CD14-positive monocyte (primary cell): ENCODE measurements at regions of chr16 and their contacts with region 1.

Region 1: GRCh38 chr16:29694384-29695195 is 15.6 kb downstream of the QPRT start:
- DNase-seq: no peak
- H3K4me3 ChIP-seq: no peak overlapping the region
- H3K4me3 Mint-ChIP-seq: no peak overlapping the region
- H3K27ac ChIP-seq: no peak overlapping the region
- H3K27ac Mint-ChIP-seq: peak overlapping the region in 1 of 7 donors; percentile 25
- H3K4me1 ChIP-seq: peaks cover 6 to 8% of the 10 kb centered on the region in 2 donors
- H3K4me1 Mint-ChIP-seq: peaks cover 12% of the 10 kb centered on the region
- H3K27me3 ChIP-seq: no peaks in the 10 kb centered on the region
- H3K27me3 Mint-ChIP-seq: peaks cover 4 to 5% (median 5%) of the 10 kb centered on the region in 3 donors
- CTCF ChIP-seq: no peak

Region 2: GRCh38 chr16:29729116-29729521 is 34.5 kb after region 1 on chr16:
- intact Hi-C with region 1: loop called in 1 of 2 experiments (anchors 5 kb)
- DNase-seq: peak in 2 of 3 donors; percentile 28 to 36
- H3K4me3 ChIP-seq: no peak overlapping the region
- H3K4me3 Mint-ChIP-seq: no peak overlapping the region
- H3K27ac ChIP-seq: no peak overlapping the region
- H3K27ac Mint-ChIP-seq: no peak overlapping the region
- H3K4me1 ChIP-seq: peaks cover 0 to 5% of the 10 kb centered on the region in 2 donors
- H3K4me1 Mint-ChIP-seq: peaks cover 11% of the 10 kb centered on the region
- H3K27me3 ChIP-seq: no peaks in the 10 kb centered on the region
- H3K27me3 Mint-ChIP-seq: peaks cover 0 to 8% (median 6%) of the 10 kb centered on the region in 3 donors
- CTCF ChIP-seq: peak; percentile 74

Region 3: GRCh38 chr16:29848420-29849297 is 154.1 kb after region 1 on chr16:
- intact Hi-C with region 1: loop called in 1 of 2 experiments (anchors 5 kb)
- DNase-seq: peak; percentile 64 to 70 (median 64)
- H3K4me3 ChIP-seq: no peak overlapping the region
- H3K4me3 Mint-ChIP-seq: no peak overlapping the region
- H3K27ac ChIP-seq: no peak overlapping the region
- H3K27ac Mint-ChIP-seq: no peak overlapping the region
- H3K4me1 ChIP-seq: no peaks in the 10 kb centered on the region
- H3K4me1 Mint-ChIP-seq: no peaks in the 10 kb centered on the region
- H3K27me3 ChIP-seq: no peaks in the 10 kb centered on the region
- H3K27me3 Mint-ChIP-seq: peaks cover 0 to 2% (median 1%) of the 10 kb centered on the region in 3 donors
- CTCF ChIP-seq: peak; percentile 92

Region 4: DNA sequence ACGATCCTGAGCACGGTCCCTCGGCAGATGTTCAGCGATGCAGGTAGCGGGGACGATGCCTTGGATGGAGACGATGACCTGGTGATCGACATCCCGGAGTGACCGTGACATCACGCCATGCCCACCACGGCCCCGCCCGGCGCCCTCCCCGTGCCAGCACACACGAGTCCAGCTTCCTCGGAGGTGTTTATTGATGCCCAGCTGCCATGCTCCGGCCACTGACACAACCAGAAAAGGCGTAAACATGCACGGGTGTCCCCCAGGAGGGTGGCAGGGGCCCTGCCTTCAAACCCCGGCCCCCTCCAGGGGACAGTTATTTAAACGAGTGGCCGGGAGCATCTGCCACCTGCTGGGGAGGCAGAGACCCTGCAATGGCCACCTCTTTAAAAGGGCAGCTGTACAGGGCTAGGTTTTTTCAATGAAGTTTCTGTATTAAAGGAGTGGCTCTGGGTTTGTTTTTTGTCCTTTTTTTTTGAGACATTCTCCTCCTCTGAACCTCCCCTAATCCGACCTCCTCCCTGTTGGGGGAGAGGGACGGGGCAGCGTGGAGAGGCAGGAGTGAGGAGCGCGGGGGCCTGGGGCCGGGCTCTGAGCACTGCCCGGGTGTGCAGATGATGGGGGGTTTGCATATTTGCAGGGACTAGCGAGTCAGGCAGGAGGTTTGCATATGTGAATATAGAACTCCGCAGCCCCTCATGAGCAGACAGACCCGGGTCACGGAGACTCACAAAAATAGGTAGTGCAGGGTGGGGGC is 310.9 kb after region 1 on chr16:
- intact Hi-C with region 1: loop called in 1 of 2 experiments (anchors 5 kb)
- DNase-seq: peak; percentile 15 to 34 (median 26)
- H3K4me3 ChIP-seq: no peak overlapping the region
- H3K4me3 Mint-ChIP-seq: no peak overlapping the region
- H3K27ac ChIP-seq: no peak overlapping the region
- H3K27ac Mint-ChIP-seq: no peak overlapping the region
- H3K4me1 ChIP-seq: peaks cover 2 to 4% of the 10 kb centered on the region in 2 donors
- H3K4me1 Mint-ChIP-seq: peaks cover 2% of the 10 kb centered on the region
- H3K27me3 ChIP-seq: peaks cover 6 to 15% of the 10 kb centered on the region in 2 donors
- H3K27me3 Mint-ChIP-seq: peaks cover 12 to 25% (median 18%) of the 10 kb centered on the region in 3 donors
- CTCF ChIP-seq: peak; percentile 77

Region 5: GRCh38 chr16:30028438-30029076 is 334.0 kb after region 1 on chr16:
- intact Hi-C with region 1: loop called in 1 of 2 experiments (anchors 10 kb)
- DNase-seq: no peak
- H3K4me3 ChIP-seq: no peak overlapping the region
- H3K4me3 Mint-ChIP-seq: peak overlapping the region in 1 of 2 donors; percentile 77
- H3K27ac ChIP-seq: no peak overlapping the region
- H3K27ac Mint-ChIP-seq: peak overlapping the region in 1 of 7 donors; percentile 50
- H3K4me1 ChIP-seq: peaks cover 0 to 4% of the 10 kb centered on the region in 2 donors
- H3K4me1 Mint-ChIP-seq: peaks cover 1% of the 10 kb centered on the region
- H3K27me3 ChIP-seq: peaks cover 30 to 59% of the 10 kb centered on the region in 2 donors
- H3K27me3 Mint-ChIP-seq: peaks cover 52 to 72% (median 66%) of the 10 kb centered on the region in 3 donors
- CTCF ChIP-seq: no peak